ENCODE measurements at regions of chr11 and their contacts with region 1.

Region 1: DNA sequence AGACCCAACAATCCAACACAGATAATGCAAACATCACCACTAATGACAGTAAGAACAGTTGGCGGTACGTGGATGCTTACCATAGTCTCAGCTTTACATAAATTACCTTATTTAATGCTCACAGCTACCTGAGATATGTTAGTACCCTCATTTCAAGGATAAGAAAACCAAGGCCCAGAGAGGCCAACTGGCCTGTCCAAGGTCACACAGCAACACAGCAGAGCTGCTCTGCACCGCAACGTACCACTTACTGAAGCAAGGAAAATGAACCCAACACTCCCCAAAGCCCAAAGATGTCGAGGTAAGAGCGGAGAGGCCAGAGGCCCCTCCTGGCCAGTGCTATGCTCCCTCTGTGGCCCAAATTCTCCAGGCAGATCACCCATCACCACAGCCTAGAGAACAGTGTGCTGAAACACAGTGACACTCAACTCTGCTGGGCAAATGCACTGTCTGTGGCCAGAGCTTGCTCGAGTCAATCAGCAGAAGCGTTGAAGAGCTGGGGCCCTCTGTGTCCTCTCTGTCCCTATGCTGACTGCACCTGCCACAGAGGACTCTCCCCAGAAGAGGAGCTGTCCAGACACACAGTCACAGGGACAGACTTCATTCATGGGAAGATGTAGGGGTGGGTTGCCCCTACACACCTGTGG is 14.0 kb downstream of the SHANK2 start:
- DNase-seq: no peak
- H3K4me3 ChIP-seq: no peak overlapping the region
- H3K27ac ChIP-seq: no peak overlapping the region
- H3K27me3 ChIP-seq: peaks cover 4% of the 10 kb centered on the region
- CTCF ChIP-seq: no peak

Region 2: GRCh38 chr11:71210861-71211260 is 27.5 kb before region 1 on chr11:
- CTCF ChIA-PET with region 1: no interaction called
- POLR2A ChIA-PET with region 1: interaction called, 11 read pairs
- DNase-seq: no peak
- H3K4me3 ChIP-seq: no peak overlapping the region
- H3K27ac ChIP-seq: no peak overlapping the region
- H3K27me3 ChIP-seq: no peaks in the 10 kb centered on the region
- CTCF ChIP-seq: no peak